Dendritic cell treated with granulocyte-macrophage colony-stimulating factor and Interleukin-4, amounts not matched to agents 40 ng/mL and 50 ng/mL, for 4 days (primary cell): ENCODE measurements at regions of chr5 and their contacts with region 1.

Region 1: GRCh38 chr5:178461004-178461730 is 129.0 kb downstream of the COL23A1 start:
- H3K4me3 Mint-ChIP-seq: peak overlapping the region; percentile 25
- H3K27ac Mint-ChIP-seq: peak overlapping the region; percentile 79
- H3K4me1 Mint-ChIP-seq: peaks cover 62% of the 10 kb centered on the region
- H3K27me3 Mint-ChIP-seq: peaks cover 3% of the 10 kb centered on the region

Region 2: GRCh38 chr5:178428341-178428964 is 32.7 kb before region 1 on chr5:
- intact Hi-C with region 1: no loop called
- H3K4me3 Mint-ChIP-seq: no peak overlapping the region
- H3K27ac Mint-ChIP-seq: no peak overlapping the region
- H3K4me1 Mint-ChIP-seq: peaks cover 20% of the 10 kb centered on the region
- H3K27me3 Mint-ChIP-seq: peaks cover 1% of the 10 kb centered on the region

Region 3: GRCh38 chr5:178551059-178551458 is 89.9 kb after region 1 on chr5:
- intact Hi-C with region 1: loop called (anchors 1 kb)
- H3K4me3 Mint-ChIP-seq: no peak overlapping the region
- H3K27ac Mint-ChIP-seq: no peak overlapping the region
- H3K4me1 Mint-ChIP-seq: peaks cover 18% of the 10 kb centered on the region
- H3K27me3 Mint-ChIP-seq: no peaks in the 10 kb centered on the region